Transverse colon (tissue), 4 donors: ENCODE measurements at regions of chr17 and their contacts with region 1.

Region 1: GRCh38 chr17:51640108-51640622 is 379.8 kb downstream of the UTP18 start:
- DNase-seq: no peak
- H3K4me3 ChIP-seq: no peak overlapping the region
- H3K27ac ChIP-seq: no peak overlapping the region
- H3K4me1 ChIP-seq: no peaks in the 10 kb centered on the region
- H3K27me3 ChIP-seq: no peaks in the 10 kb centered on the region
- CTCF ChIP-seq: no peak
- EP300 ChIP-seq: no peak
- POLR2A ChIP-seq: no peak

Region 2: GRCh38 chr17:51703361-51704341 is 63.5 kb after region 1 on chr17:
- in situ Hi-C with region 1: no loop called
- intact Hi-C with region 1: no loop called
- DNase-seq: no peak
- H3K4me3 ChIP-seq: no peak overlapping the region
- H3K27ac ChIP-seq: no peak overlapping the region
- H3K4me1 ChIP-seq: no peaks in the 10 kb centered on the region
- H3K27me3 ChIP-seq: no peaks in the 10 kb centered on the region
- CTCF ChIP-seq: no peak
- EP300 ChIP-seq: no peak
- POLR2A ChIP-seq: no peak

Region 3: GRCh38 chr17:51734462-51734861 is 94.3 kb after region 1 on chr17:
- in situ Hi-C with region 1: loop called in 1 of 4 experiments (anchors 25 kb)
- intact Hi-C with region 1: no loop called
- DNase-seq: no peak
- H3K4me3 ChIP-seq: no peak overlapping the region
- H3K27ac ChIP-seq: no peak overlapping the region
- H3K4me1 ChIP-seq: peaks cover 0 to 9% (median 3%) of the 10 kb centered on the region in 4 donors
- H3K27me3 ChIP-seq: no peaks in the 10 kb centered on the region
- CTCF ChIP-seq: peak in 2 of 5 experiments; percentile 8 to 37
- EP300 ChIP-seq: no peak
- POLR2A ChIP-seq: no peak